Panc1 (cell line): ENCODE measurements at regions of chr18 and their contacts with region 1.

Region 1: DNA sequence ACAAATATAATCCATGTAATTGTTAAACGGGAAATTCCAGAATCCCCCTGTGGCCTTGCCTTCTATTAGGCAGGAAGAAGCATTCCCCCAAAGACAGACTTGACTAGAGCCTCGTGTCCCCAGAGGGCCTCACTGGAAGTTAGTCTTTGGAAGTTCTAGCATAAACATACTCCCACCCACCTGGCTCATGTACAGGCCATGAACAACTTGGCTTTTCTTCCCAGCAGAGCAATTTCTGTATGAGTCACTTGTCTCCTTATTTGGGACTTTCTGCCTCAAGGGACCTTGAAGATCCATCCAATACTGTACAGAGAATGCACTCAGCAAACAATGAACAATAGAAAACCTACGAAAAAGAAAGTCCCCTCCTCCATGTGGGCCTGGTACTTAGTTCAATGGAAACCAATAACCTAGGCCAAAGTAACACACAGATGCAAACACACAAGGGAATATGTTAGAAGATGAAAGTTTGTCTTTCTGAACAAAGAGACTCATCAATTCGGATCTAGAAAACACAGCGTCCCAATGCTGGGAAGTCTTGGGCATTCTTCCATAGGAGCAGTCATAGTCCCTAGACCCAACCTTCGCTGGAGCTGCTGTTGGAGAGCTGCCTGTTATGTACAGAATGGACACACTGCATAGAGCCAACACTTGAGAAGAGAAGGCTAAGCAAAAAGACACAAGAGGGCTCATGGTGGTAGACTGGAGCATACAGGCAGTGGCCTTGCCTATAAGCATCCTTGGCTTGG is 303.5 kb downstream of the HRH4 start:
- DNase-seq: no peak
- ATAC-seq: no peak
- H3K4me3 ChIP-seq: no peak overlapping the region
- H3K27ac ChIP-seq: no peak overlapping the region
- H3K4me1 ChIP-seq: no peaks in the 10 kb centered on the region
- H3K27me3 ChIP-seq: no peaks in the 10 kb centered on the region
- CTCF ChIP-seq: no peak

Region 2: DNA sequence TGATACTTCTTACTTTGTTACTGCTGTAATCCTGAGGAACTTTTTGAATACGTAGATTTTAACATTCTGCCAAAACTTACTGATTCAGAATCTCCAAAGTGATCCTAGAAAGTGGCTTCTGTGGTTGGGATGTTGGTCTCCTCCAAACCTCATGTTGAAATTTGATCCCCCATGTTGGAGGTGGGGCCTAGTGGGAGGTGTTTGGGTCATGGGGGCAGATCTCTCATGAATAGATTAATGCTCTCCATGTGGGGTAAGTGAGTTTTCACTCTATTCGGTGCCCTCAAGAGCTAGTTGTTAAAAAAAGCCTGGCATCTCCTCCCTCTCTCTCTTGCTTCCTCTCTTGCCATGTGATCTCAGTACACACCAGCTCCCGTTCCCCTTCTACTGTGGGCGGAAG is 26.4 kb after region 1 on chr18:
- CTCF ChIA-PET with region 1: interaction called, 10 read pairs
- POLR2A ChIA-PET with region 1: no interaction called
- in situ Hi-C with region 1: no loop called
- intact Hi-C with region 1: no loop called
- DNase-seq: no peak
- ATAC-seq: no peak
- H3K4me3 ChIP-seq: no peak overlapping the region
- H3K27ac ChIP-seq: no peak overlapping the region
- H3K4me1 ChIP-seq: no peaks in the 10 kb centered on the region
- H3K27me3 ChIP-seq: no peaks in the 10 kb centered on the region
- CTCF ChIP-seq: no peak